Natural killer cell (primary cell): ENCODE measurements at regions of chr20 and their contacts with region 1.

Region 1: GRCh38 chr20:50120897-50121693 is 8.1 kb upstream of the UBE2V1 start:
- DNase-seq: peak; percentile 41 to 84
- ATAC-seq: peak; percentile 76 to 87 (median 83)
- H3K4me3 ChIP-seq: no peak overlapping the region
- H3K4me3 Mint-ChIP-seq: no peak overlapping the region
- H3K27ac ChIP-seq: no peak overlapping the region
- H3K27ac Mint-ChIP-seq: peak overlapping the region in 1 of 2 donors; percentile 24
- H3K4me1 ChIP-seq: peaks cover 3% of the 10 kb centered on the region
- H3K4me1 Mint-ChIP-seq: peaks cover 9% of the 10 kb centered on the region in 2 donors
- H3K27me3 ChIP-seq: no peaks in the 10 kb centered on the region
- H3K27me3 Mint-ChIP-seq: no peaks in the 10 kb centered on the region
- CTCF ChIP-seq: peak; percentile 65

Region 2: GRCh38 chr20:50169329-50169831 is 48.3 kb after region 1 on chr20:
- intact Hi-C with region 1: loop called (anchors 1 kb)
- DNase-seq: peak; percentile 83 to 90
- ATAC-seq: peak; percentile 71 to 88 (median 84)
- H3K4me3 ChIP-seq: no peak overlapping the region
- H3K4me3 Mint-ChIP-seq: no peak overlapping the region
- H3K27ac ChIP-seq: no peak overlapping the region
- H3K27ac Mint-ChIP-seq: peak overlapping the region in 1 of 2 donors; percentile 35
- H3K4me1 ChIP-seq: peaks cover 18% of the 10 kb centered on the region
- H3K4me1 Mint-ChIP-seq: peaks cover 9 to 17% of the 10 kb centered on the region in 2 donors
- H3K27me3 ChIP-seq: peaks cover 2% of the 10 kb centered on the region
- H3K27me3 Mint-ChIP-seq: peaks cover 13 to 14% of the 10 kb centered on the region in 2 donors
- CTCF ChIP-seq: peak; percentile 96